ENCODE measurements at regions of chr5 and their contacts with region 1.

Region 1: GRCh38 chr5:118611332-118611945 is 376.9 kb downstream of the DTWD2 start:
- DNase-seq: peak in 1 of 2 experiments; percentile 63
- H3K4me3 ChIP-seq: no peak overlapping the region
- H3K27ac ChIP-seq: no peak overlapping the region
- H3K4me1 ChIP-seq: 0 out of 7 replicates have a peak, but pooled peaks cover 0 to 2% (median 0%) of the 10 kb centered on the region in 4 experiments
- H3K27me3 ChIP-seq: no peaks in the 10 kb centered on the region
- CTCF ChIP-seq: peak; percentile 1 to 86 (median 69)
- EP300 ChIP-seq: no peak
- POLR2A ChIP-seq: no peak
- RAD21 ChIP-seq: peak; percentile 94 to 98

Region 2: GRCh38 chr5:118628660-118629354 is 17.4 kb after region 1 on chr5:
- CTCF ChIA-PET with region 1: interaction called, 12 read pairs
- POLR2A ChIA-PET with region 1: no interaction called
- DNase-seq: peak in 1 of 2 experiments; percentile 29
- H3K4me3 ChIP-seq: no peak overlapping the region
- H3K27ac ChIP-seq: no peak overlapping the region
- H3K4me1 ChIP-seq: peaks cover 0 to 7% (median 2%) of the 10 kb centered on the region in 4 experiments; a peak in 2 of 7 replicates
- H3K27me3 ChIP-seq: no peaks in the 10 kb centered on the region
- CTCF ChIP-seq: peak in 2 of 3 experiments; percentile 14 to 22; a peak in 2 of 4 replicates
- EP300 ChIP-seq: no peak
- POLR2A ChIP-seq: no peak
- RAD21 ChIP-seq: peak; percentile 43 to 57

Region 3: DNA sequence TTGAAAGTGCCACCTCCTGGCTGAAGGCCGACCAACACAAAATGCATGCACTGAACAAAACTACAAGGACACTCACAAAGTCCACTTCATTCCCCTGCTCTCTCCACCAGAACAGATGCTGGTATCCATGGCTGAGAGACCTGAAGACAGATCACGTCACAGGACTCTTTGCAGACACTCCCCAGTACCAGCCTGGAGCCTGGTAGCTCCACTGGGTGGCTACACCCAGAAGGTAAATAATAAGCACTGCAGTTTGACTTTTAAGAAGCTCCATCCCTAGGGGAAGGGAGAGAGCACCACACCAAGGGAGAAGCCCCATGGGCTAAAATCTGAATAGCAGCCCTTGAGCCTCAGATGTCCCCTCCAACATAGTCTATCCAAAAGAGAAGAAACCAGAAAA is 27.5 kb after region 1 on chr5:
- CTCF ChIA-PET with region 1: no interaction called
- POLR2A ChIA-PET with region 1: no interaction called
- DNase-seq: no peak
- H3K4me3 ChIP-seq: no peak overlapping the region
- H3K27ac ChIP-seq: no peak overlapping the region
- H3K4me1 ChIP-seq: no peaks in the 10 kb centered on the region
- H3K27me3 ChIP-seq: no peaks in the 10 kb centered on the region
- CTCF ChIP-seq: no peak
- EP300 ChIP-seq: no peak
- POLR2A ChIP-seq: no peak
- RAD21 ChIP-seq: no peak

Region 4: GRCh38 chr5:118653872-118654271 is 42.4 kb after region 1 on chr5:
- CTCF ChIA-PET with region 1: no interaction called
- POLR2A ChIA-PET with region 1: no interaction called
- DNase-seq: no peak
- H3K4me3 ChIP-seq: no peak overlapping the region
- H3K27ac ChIP-seq: no peak overlapping the region
- H3K4me1 ChIP-seq: no peaks in the 10 kb centered on the region
- H3K27me3 ChIP-seq: no peaks in the 10 kb centered on the region
- CTCF ChIP-seq: no peak
- EP300 ChIP-seq: no peak
- POLR2A ChIP-seq: no peak
- RAD21 ChIP-seq: no peak